Activated CD4-positive, alpha-beta T cell treated with anti-CD3 and anti-CD28 coated beads for 36 hours (primary cell): ENCODE measurements at regions of chr9 and their contacts with region 1.

Region 1: DNA sequence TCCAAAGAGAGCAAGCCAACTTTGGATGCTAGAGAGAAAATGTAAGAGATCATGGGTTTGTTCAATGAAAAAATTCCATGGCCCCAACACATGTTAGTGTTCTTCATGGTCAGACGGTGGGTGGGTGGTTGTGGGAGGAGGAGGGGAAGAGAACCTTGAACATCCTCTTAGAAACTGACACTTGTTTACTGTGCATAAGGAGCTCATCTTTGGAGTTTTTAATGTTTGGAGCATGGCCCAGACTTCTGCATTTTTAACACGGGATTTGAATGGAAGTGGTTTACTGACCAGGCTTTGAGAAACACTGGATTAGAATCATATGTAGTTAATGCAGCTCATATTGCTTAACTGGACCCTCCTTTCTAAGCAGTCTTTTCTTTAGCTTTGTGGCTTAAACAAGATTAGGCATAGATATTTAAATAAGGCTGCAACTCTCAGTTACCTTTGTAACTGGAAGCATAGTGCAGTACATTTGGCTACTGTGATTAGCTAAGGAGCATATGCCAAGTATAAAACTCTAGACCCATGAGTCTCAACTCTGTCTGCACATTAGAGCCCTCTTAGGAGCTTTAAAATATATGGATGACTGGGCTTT is 60.1 kb downstream of the FOCAD start:
- DNase-seq: no peak
- ATAC-seq: no peak
- H3K4me3 Mint-ChIP-seq: no peak overlapping the region
- H3K27ac Mint-ChIP-seq: no peak overlapping the region
- H3K4me1 Mint-ChIP-seq: peaks cover 12% of the 10 kb centered on the region
- H3K27me3 Mint-ChIP-seq: no peaks in the 10 kb centered on the region

Region 2: DNA sequence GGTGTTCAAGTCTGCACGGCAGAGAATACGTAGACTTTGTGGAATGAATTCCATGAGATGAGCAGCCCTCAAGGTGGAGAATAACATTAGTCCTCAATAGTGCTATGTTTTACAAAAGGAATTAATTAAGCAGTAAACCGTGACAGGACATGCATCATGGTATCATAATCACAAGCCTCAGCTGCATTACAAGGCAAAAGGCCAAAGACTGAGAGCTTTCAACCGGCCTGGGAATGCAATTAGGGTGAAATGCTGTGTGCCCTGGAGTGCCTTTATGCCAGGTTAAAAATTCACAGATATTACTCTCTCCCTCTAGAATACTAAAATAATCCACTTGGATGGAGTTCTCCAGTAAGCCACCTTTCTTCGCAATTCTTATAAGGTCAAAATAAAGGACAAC is 392.4 kb before region 1 on chr9:
- CTCF ChIA-PET with region 1: no interaction called
- POLR2A ChIA-PET with region 1: no interaction called
- intact Hi-C with region 1: no loop called
- DNase-seq: no peak
- ATAC-seq: no peak
- H3K4me3 Mint-ChIP-seq: no peak overlapping the region
- H3K27ac Mint-ChIP-seq: no peak overlapping the region
- H3K4me1 Mint-ChIP-seq: peaks cover 39% of the 10 kb centered on the region
- H3K27me3 Mint-ChIP-seq: no peaks in the 10 kb centered on the region

Region 3: DNA sequence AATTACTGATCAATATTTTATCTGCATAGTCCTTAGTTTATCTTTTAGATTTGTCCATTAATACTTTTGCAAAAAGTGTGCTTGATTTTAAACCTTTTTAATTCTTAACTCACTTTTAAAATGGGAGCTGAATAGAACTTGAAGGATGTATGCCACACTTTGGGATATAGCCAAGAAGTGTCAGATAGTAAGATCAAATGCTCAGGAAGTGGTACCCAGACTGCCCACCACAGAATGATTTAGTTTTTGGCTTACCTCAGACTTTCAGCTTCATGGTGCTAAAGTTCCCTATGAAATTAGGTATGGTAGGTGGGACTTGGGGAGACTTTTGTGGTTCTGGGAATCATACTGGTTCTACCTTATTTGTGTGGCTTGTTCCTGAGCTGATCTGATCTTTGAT is 45.4 kb before region 1 on chr9:
- CTCF ChIA-PET with region 1: interaction called, 3 read pairs
- POLR2A ChIA-PET with region 1: no interaction called
- intact Hi-C with region 1: loop called in 1 of 2 experiments (anchors 2 kb)
- DNase-seq: no peak
- ATAC-seq: no peak
- H3K4me3 Mint-ChIP-seq: no peak overlapping the region
- H3K27ac Mint-ChIP-seq: no peak overlapping the region
- H3K4me1 Mint-ChIP-seq: peaks cover 10% of the 10 kb centered on the region
- H3K27me3 Mint-ChIP-seq: no peaks in the 10 kb centered on the region

Region 4: GRCh38 chr9:20811872-20812271 is 67.7 kb after region 1 on chr9:
- CTCF ChIA-PET with region 1: no interaction called
- POLR2A ChIA-PET with region 1: no interaction called
- intact Hi-C with region 1: no loop called
- DNase-seq: no peak
- ATAC-seq: no peak
- H3K4me3 Mint-ChIP-seq: no peak overlapping the region
- H3K27ac Mint-ChIP-seq: no peak overlapping the region
- H3K4me1 Mint-ChIP-seq: no peaks in the 10 kb centered on the region
- H3K27me3 Mint-ChIP-seq: no peaks in the 10 kb centered on the region